ENCODE measurements at regions of chr7 and their contacts with region 1.

Region 1: DNA sequence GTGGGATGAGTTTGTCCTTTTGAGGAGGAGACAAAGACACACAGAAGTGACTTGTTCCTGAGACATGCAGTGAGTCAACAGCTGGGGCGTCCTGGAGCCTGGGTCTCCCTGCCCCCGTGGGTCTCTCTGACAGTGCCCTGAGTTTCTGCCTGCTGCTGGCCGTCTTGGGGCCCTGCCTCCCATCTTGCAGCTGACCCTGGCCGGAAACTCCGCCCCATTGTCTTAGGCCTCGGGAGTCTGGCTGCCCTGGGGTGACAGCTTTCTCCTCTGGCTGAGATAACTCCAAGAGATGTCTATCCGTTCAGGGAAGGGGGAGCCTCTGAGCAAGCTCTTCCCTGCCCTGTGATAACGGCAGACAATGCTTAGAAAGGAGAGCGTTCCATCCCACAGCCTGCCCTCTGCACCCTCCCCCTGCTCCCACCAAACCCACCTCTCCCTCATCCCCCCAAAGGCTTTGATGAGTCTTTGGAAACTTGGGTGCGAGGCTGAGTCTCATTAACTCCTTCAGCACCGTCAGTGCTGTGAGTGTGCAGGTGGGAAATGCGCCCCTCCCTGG is 69.5 kb upstream of the PODXL start:
- DNase-seq: peak; percentile 68
- ATAC-seq: peak; percentile 85
- H3K4me3 Mint-ChIP-seq: no peak overlapping the region; the same call in 1 of the 2 replicates
- H3K27ac Mint-ChIP-seq: peak overlapping the region; percentile 98
- H3K4me1 Mint-ChIP-seq: peaks cover 69% of the 10 kb centered on the region
- H3K27me3 Mint-ChIP-seq: peaks cover 16% of the 10 kb centered on the region
- CTCF ChIP-seq: no peak

Region 2: DNA sequence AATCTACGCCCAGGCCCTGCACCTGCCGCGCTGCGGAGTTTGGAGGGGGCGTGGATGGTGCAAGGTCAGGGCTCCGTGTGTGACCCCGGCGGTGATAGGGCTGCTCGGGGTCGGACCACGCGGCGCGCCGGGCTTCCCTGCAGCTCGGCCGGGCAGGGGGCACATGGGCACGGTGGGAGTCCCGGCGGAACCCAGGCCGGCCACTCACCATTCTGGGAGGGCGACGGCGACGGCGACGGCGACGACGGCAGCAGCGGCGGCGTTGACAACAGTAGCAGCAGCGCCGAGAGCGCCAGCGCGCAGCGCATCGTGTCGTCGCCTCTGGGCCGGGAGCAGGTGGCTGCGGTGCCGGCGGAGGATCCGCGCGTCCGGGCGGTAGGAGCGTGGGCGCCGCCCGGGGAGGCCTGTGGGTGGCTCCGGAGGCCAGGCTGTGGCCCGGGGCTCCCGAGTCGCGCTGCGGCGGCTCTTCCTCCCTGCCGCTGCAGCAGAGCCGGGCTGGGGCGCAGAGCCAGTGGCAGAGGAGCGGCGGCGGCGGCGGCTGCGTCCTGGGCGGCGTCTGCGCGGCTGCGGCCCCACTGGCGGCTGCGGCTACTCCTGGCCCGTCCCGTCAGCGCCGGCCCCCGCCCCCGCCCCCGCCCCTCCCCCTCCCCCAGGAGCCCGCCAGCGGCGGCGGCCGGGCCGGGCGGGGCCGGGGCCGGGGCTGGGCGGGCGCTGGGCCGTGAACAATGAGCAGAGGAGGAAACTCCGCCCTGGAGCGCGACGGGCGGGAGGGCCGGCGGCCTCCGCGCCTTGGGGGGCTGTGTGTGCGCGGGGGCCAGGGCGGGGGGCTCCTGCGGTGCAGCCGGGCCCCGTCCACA is 69.6 kb before region 1 on chr7 and contains the start of gene PODXL:
- CTCF ChIA-PET with region 1: interaction called, 10 read pairs
- POLR2A ChIA-PET with region 1: interaction called, 3 read pairs
- DNase-seq: peak; percentile 79
- ATAC-seq: peak; percentile 71
- H3K4me3 Mint-ChIP-seq: peak within 1 kb of the TSS; percentile 95
- H3K27ac Mint-ChIP-seq: peak within 1 kb of the TSS; percentile 96
- H3K4me1 Mint-ChIP-seq: peaks cover 62% of the 10 kb centered on the region
- H3K27me3 Mint-ChIP-seq: no peaks in the 10 kb centered on the region; the same call in 1 of the 2 replicates
- CTCF ChIP-seq: no peak
- total RNA-seq, gene PODXL: 483 to 623 TPM (median 614 TPM) in 3 replicates

Region 3: GRCh38 chr7:131568970-131569369 is 56.9 kb before region 1 on chr7:
- CTCF ChIA-PET with region 1: no interaction called
- POLR2A ChIA-PET with region 1: no interaction called
- DNase-seq: no peak
- ATAC-seq: peak; percentile 34; the same call in 1 of the 2 replicates
- H3K4me3 Mint-ChIP-seq: no peak overlapping the region
- H3K27ac Mint-ChIP-seq: no peak overlapping the region
- H3K4me1 Mint-ChIP-seq: peaks cover 27% of the 10 kb centered on the region
- H3K27me3 Mint-ChIP-seq: peaks cover 25% of the 10 kb centered on the region
- CTCF ChIP-seq: no peak

Region 4: GRCh38 chr7:131581241-131582051 is 44.4 kb before region 1 on chr7:
- CTCF ChIA-PET with region 1: interaction called, 4 read pairs
- POLR2A ChIA-PET with region 1: interaction called, 12 read pairs
- DNase-seq: no peak
- ATAC-seq: peak; percentile 50
- H3K4me3 Mint-ChIP-seq: no peak overlapping the region
- H3K27ac Mint-ChIP-seq: peak overlapping the region; percentile 49; the same call in 1 of the 2 replicates
- H3K4me1 Mint-ChIP-seq: peaks cover 29% of the 10 kb centered on the region
- H3K27me3 Mint-ChIP-seq: no peaks in the 10 kb centered on the region; the same call in 1 of the 2 replicates
- CTCF ChIP-seq: no peak

Region 5: GRCh38 chr7:131604841-131605279 is 21.0 kb before region 1 on chr7:
- CTCF ChIA-PET with region 1: interaction called, 25 read pairs
- POLR2A ChIA-PET with region 1: interaction called, 4 read pairs
- DNase-seq: no peak
- ATAC-seq: peak; percentile 43
- H3K4me3 Mint-ChIP-seq: peak overlapping the region; percentile 59
- H3K27ac Mint-ChIP-seq: peak overlapping the region; percentile 100
- H3K4me1 Mint-ChIP-seq: peaks cover 81% of the 10 kb centered on the region
- H3K27me3 Mint-ChIP-seq: no peaks in the 10 kb centered on the region; the same call in 1 of the 2 replicates
- CTCF ChIP-seq: no peak